ENCODE measurements at regions of chr17 and their contacts with region 1.

Region 1: GRCh38 chr17:64547319-64547718 is 40.5 kb downstream of the CEP95 start:
- DNase-seq: no peak
- H3K4me3 ChIP-seq: no peak overlapping the region
- H3K4me3 Mint-ChIP-seq: no peak overlapping the region
- H3K27ac Mint-ChIP-seq: no peak overlapping the region
- H3K4me1 ChIP-seq: no peaks in the 10 kb centered on the region
- H3K4me1 Mint-ChIP-seq: no peaks in the 10 kb centered on the region
- H3K27me3 ChIP-seq: no peaks in the 10 kb centered on the region
- H3K27me3 Mint-ChIP-seq: no peaks in the 10 kb centered on the region
- CTCF ChIP-seq: no peak

Region 2: DNA sequence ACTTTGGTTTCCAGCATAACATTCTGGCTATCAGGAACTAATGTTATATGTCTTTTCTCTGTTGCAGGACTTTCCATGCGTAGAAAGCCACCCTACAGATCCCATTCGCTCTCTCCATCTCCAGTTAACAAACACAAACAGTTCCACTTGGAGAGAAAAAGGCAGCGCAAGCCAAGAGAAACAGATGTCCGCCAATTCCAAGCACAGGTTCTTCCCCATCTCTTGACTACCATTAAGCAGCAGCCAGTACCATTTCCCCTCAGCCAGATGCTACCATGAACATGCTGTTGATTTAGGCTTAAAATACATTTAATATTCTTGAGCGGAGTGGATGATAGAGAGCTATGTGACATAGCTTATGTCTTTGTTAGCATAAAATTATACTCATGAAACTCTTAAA is 18.1 kb before region 1 on chr17:
- CTCF ChIA-PET with region 1: interaction called, 13 read pairs
- POLR2A ChIA-PET with region 1: no interaction called
- intact Hi-C with region 1: no loop called
- DNase-seq: no peak
- H3K4me3 ChIP-seq: no peak overlapping the region
- H3K4me3 Mint-ChIP-seq: no peak overlapping the region
- H3K27ac Mint-ChIP-seq: no peak overlapping the region
- H3K4me1 ChIP-seq: no peaks in the 10 kb centered on the region
- H3K4me1 Mint-ChIP-seq: no peaks in the 10 kb centered on the region
- H3K27me3 ChIP-seq: no peaks in the 10 kb centered on the region
- H3K27me3 Mint-ChIP-seq: no peaks in the 10 kb centered on the region
- CTCF ChIP-seq: no peak

Region 3: DNA sequence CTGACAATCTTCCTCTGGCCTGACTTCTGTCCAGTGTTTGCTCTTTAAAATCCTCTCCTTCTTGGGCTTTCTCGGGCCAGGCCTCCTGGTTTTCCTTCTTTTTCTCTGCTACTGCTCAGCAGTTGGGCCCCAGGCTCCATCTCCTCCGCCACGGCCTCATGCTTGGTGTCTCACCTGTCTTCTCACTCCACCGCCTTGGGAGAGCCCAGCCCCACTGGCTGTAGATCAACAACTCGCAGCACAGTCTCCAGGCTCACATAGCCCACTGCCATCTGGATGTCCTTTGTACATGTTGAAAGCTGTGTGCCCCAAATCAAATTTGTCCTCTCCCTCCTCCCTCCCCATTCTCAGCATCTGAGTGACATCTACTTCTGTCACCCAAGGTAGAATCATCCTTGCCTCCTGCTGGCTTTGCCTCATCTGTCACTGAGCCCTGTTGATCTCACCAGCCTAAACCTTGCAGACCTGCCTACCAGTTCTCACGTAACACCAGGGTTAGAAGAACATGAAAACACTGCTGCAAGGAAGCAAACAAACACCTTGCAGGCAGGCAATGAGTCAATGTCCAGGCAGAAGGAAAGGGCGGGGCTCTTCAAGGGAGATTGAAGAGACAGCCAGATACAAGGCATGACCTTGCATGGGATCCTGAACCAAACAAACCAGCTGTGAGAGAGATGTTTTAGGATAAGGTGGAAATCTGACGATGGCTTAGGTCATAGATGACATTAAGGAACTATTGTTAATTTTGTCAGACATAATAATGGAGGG is 218.1 kb after region 1 on chr17:
- CTCF ChIA-PET with region 1: no interaction called
- POLR2A ChIA-PET with region 1: no interaction called
- intact Hi-C with region 1: no loop called
- DNase-seq: no peak
- H3K4me3 ChIP-seq: no peak overlapping the region
- H3K4me3 Mint-ChIP-seq: no peak overlapping the region
- H3K27ac Mint-ChIP-seq: no peak overlapping the region
- H3K4me1 ChIP-seq: no peaks in the 10 kb centered on the region
- H3K4me1 Mint-ChIP-seq: peaks cover 12% of the 10 kb centered on the region
- H3K27me3 ChIP-seq: no peaks in the 10 kb centered on the region
- H3K27me3 Mint-ChIP-seq: no peaks in the 10 kb centered on the region
- CTCF ChIP-seq: no peak

Measured in Caco-2 (cell line).